Activated T-helper 2 cell treated with anti-CD3 and anti-CD28 coated beads, Interferon-gamma antibody, Interleukin-2, Interleukin-4, amounts not matched to agents 10 μg/mL and 5 μg/mL and 100 μg/mL, durations not matched to agents 14 hours and 24 hours and 36 hours (primary cell): ENCODE measurements at regions of chr11 and their contacts with region 1.

Region 1: GRCh38 chr11:86116386-86116726 is 47.5 kb upstream of the PICALM start:
- DNase-seq: no peak
- H3K4me3 Mint-ChIP-seq: peak overlapping the region; percentile 22
- H3K27ac Mint-ChIP-seq: peak overlapping the region; percentile 83
- H3K4me1 Mint-ChIP-seq: peaks cover 42% of the 10 kb centered on the region
- H3K27me3 Mint-ChIP-seq: no peaks in the 10 kb centered on the region

Region 2: GRCh38 chr11:85947431-85948272 is 168.7 kb before region 1 on chr11:
- intact Hi-C with region 1: loop called (anchors 2 kb)
- DNase-seq: no peak
- H3K4me3 Mint-ChIP-seq: peak overlapping the region; percentile 15
- H3K27ac Mint-ChIP-seq: peak overlapping the region; percentile 75
- H3K4me1 Mint-ChIP-seq: peaks cover 35% of the 10 kb centered on the region
- H3K27me3 Mint-ChIP-seq: no peaks in the 10 kb centered on the region

Region 3: DNA sequence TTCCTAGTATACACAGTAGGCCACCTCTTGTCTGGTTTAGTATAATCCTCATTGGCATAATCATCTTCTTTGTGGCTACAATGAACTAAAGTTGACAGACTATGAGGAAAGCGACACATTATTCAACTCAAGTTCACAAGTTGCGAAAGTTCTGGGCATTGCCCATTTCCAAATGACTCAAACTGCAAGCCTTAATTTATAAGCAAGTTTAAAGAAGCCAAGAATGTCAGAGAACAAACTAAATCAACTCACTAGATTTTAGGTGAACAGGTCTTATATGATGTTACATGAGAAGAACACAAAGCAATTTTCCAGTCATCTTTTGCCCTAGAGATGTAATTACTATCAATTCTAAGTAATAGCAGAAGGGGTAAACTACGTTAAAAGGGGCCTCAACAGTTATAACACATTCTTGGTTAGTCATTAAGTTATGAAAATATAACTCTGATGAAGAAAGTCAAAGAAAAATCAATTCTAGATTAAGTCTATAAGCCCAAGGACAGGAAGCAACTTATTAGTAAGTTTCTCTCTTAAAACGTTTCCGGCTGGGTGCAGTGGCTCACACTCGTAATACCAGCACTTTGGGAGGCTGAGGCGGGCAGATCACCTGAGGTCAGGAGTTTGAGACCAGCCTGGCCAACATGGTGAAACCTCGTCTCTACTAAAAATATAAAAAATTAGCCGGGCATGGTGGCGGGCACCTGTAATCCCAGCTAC is 68.9 kb before region 1 on chr11:
- intact Hi-C with region 1: loop called (anchors 1 kb)
- DNase-seq: no peak
- H3K4me3 Mint-ChIP-seq: peak overlapping the region; percentile 65
- H3K27ac Mint-ChIP-seq: peak overlapping the region; percentile 96
- H3K4me1 Mint-ChIP-seq: peaks cover 73% of the 10 kb centered on the region
- H3K27me3 Mint-ChIP-seq: no peaks in the 10 kb centered on the region

Region 4: DNA sequence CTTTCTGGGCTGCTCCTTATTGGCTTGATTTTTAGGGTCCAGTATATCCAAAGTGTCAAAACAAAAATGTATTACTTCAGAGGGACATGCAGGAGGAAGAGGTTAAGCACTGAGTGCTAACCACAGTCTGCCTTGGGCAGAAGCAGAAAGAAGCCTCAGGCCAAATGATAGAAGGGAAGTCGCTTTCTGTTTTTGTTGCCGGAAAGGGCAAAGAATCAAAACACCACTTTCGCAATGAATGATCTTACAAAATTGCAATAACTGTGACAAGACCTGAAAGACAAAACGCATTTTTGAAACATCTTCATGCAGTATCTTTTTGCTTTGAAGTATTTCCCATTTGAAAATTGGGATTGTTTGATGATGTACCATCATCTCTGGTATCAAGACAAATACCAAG is 22.6 kb after region 1 on chr11:
- intact Hi-C with region 1: loop called (anchors 1 kb)
- DNase-seq: peak; percentile 33
- H3K4me3 Mint-ChIP-seq: peak overlapping the region; percentile 35
- H3K27ac Mint-ChIP-seq: peak overlapping the region; percentile 76
- H3K4me1 Mint-ChIP-seq: peaks cover 63% of the 10 kb centered on the region
- H3K27me3 Mint-ChIP-seq: no peaks in the 10 kb centered on the region

Region 5: GRCh38 chr11:86193297-86194095 is 77.1 kb after region 1 on chr11:
- intact Hi-C with region 1: loop called (anchors 1 kb)
- DNase-seq: peak; percentile 53
- H3K4me3 Mint-ChIP-seq: peak overlapping the region; percentile 62
- H3K27ac Mint-ChIP-seq: peak overlapping the region; percentile 71
- H3K4me1 Mint-ChIP-seq: peaks cover 36% of the 10 kb centered on the region
- H3K27me3 Mint-ChIP-seq: no peaks in the 10 kb centered on the region

Region 6: GRCh38 chr11:86202013-86202336 is 85.6 kb after region 1 on chr11:
- intact Hi-C with region 1: loop called (anchors 1 kb)
- DNase-seq: no peak
- H3K4me3 Mint-ChIP-seq: no peak overlapping the region
- H3K27ac Mint-ChIP-seq: no peak overlapping the region
- H3K4me1 Mint-ChIP-seq: peaks cover 15% of the 10 kb centered on the region
- H3K27me3 Mint-ChIP-seq: no peaks in the 10 kb centered on the region

Region 7: DNA sequence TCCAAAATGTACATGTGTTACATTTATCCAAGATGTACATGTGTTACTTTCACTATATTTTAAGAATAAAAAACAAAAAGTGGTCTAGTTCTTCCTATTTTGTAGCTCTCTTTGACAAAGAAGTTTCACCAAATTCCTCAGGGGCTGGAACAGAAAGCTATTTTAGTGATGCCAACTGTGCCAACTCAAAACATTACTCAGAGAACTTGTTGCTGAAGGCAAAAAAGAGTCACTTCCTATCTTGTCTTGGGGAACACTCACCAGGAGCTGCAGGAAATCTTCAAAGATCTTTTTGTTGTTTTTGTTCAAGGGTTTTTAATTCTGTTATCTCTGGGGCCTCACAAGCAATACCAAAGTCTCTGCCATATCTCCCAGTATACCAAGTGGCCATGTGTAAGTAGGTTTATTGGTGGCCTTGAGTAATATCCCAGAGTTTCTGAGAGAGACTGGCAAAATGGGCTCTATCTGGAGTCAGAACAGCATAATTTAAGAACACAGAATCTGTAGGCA is 114.6 kb after region 1 on chr11:
- intact Hi-C with region 1: loop called (anchors 1 kb)
- DNase-seq: no peak
- H3K4me3 Mint-ChIP-seq: no peak overlapping the region
- H3K27ac Mint-ChIP-seq: peak overlapping the region; percentile 38
- H3K4me1 Mint-ChIP-seq: peaks cover 54% of the 10 kb centered on the region
- H3K27me3 Mint-ChIP-seq: peaks cover 3% of the 10 kb centered on the region